ENCODE measurements at regions of chr15 and their contacts with region 1.

Region 1: GRCh38 chr15:40344631-40345120 is 3.9 kb upstream of the CCDC9B start:
- DNase-seq: peak; percentile 77
- ATAC-seq: peak; percentile 97
- H3K4me3 Mint-ChIP-seq: no peak overlapping the region
- H3K27ac Mint-ChIP-seq: no peak overlapping the region
- H3K4me1 Mint-ChIP-seq: no peaks in the 10 kb centered on the region
- H3K27me3 Mint-ChIP-seq: no peaks in the 10 kb centered on the region
- CTCF ChIP-seq: peak; percentile 85

Region 2: DNA sequence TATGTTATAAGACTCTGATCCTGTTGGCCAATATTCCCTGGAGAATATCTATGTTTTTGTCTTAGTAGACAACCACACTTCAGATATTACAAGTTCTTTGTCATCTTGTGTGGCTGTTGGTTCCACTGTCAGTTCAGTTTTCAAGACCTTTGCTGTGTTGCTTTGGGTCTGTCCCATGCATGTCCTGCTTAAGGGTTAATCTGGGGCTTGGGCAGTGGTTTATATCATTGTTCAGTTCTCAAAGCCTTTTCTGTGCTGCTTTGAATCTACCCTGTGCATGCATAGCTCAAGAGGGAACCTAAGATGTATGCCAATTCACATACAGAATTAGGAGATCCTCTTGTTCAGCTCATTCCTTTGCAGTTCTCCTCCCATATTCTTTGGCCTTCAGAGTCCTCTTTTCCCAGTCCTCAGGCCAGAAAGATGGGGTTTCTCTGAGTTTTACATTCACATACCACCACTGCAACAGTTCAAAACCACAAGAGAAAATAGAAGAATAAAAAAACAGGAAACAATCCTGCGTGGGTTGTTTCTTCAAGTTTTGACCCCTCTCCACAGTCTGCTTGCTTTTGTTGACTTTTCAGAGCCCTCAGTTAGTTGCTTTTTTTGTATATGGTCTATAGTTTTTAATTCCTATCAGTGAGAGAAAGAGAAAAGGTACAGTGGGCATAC is 162.2 kb before region 1 on chr15:
- CTCF ChIA-PET with region 1: no interaction called
- POLR2A ChIA-PET with region 1: no interaction called
- intact Hi-C with region 1: no loop called
- DNase-seq: no peak
- ATAC-seq: no peak
- H3K4me3 Mint-ChIP-seq: no peak overlapping the region
- H3K27ac Mint-ChIP-seq: peak overlapping the region; percentile 0
- H3K4me1 Mint-ChIP-seq: peaks cover 23% of the 10 kb centered on the region
- H3K27me3 Mint-ChIP-seq: no peaks in the 10 kb centered on the region
- CTCF ChIP-seq: no peak

Region 3: DNA sequence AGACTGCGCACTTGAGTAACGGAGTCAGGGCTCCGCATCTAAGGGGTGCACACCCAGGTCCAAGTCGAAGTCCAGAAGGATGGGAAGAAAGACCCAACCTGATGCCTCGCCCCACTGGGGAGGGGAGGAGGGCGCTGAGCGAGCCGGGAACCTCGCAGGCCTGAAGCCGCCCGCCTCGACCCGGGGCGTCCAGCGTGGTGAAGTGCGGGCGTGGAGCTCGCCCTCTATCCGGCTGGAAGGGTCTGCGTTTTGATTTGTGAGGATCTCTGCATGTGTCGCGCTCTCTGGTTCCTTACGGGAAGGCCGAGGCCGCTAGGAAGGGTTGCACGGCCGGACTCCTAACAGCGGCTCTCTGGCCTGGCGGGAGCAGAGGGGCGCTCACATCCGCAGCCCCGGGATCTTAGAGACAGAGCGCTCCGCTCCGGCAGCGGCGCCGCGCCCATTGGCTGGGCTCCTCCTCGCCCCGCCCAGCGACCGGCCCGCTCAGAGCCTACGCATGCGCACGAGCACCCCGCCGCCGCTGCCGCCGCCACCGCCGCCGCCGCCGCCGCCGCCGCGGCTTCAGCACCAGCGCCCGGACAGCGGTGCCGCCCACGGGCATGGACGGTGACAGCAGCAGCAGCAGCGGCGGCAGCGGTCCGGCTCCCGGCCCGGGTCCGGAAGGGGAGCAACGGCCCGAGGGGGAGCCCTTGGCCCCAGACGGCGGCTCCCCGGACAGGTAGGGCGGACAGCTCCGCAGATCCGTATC is 13.2 kb after region 1 on chr15 and contains the start of gene DISP2:
- CTCF ChIA-PET with region 1: interaction called, 71 read pairs
- POLR2A ChIA-PET with region 1: interaction called, 5 read pairs
- intact Hi-C with region 1: no loop called
- DNase-seq: peak; percentile 87
- ATAC-seq: peak; percentile 94
- H3K4me3 Mint-ChIP-seq: peak within 1 kb of the TSS; percentile 71
- H3K27ac Mint-ChIP-seq: no peak within 1 kb of the TSS
- H3K4me1 Mint-ChIP-seq: peaks cover 7% of the 10 kb centered on the region
- H3K27me3 Mint-ChIP-seq: no peaks in the 10 kb centered on the region
- CTCF ChIP-seq: no peak
- total RNA-seq, gene DISP2: 0.09 to 0.20 TPM

Region 4: GRCh38 chr15:40405501-40406381 is 61.1 kb after region 1 on chr15 and contains the start of gene IVD:
- CTCF ChIA-PET with region 1: interaction called, 16 read pairs
- POLR2A ChIA-PET with region 1: no interaction called
- intact Hi-C with region 1: no loop called
- DNase-seq: peak; percentile 96
- ATAC-seq: peak; percentile 98
- H3K4me3 Mint-ChIP-seq: peak within 1 kb of the TSS; percentile 77
- H3K27ac Mint-ChIP-seq: peak within 1 kb of the TSS; percentile 95
- H3K4me1 Mint-ChIP-seq: peaks cover 47% of the 10 kb centered on the region
- H3K27me3 Mint-ChIP-seq: no peaks in the 10 kb centered on the region
- CTCF ChIP-seq: no peak
- total RNA-seq, gene IVD: 56.9 to 65.0 TPM